ENCODE measurements at regions of chr1 and their contacts with region 1.

Region 1: GRCh38 chr1:211285196-211285595 is 26.0 kb downstream of the RCOR3 start:
- DNase-seq: no peak
- ATAC-seq: no peak
- H3K4me3 ChIP-seq: no peak overlapping the region
- H3K4me3 Mint-ChIP-seq: no peak overlapping the region
- H3K27ac ChIP-seq: no peak overlapping the region
- H3K27ac Mint-ChIP-seq: no peak overlapping the region
- H3K4me1 ChIP-seq: no peaks in the 10 kb centered on the region
- H3K4me1 Mint-ChIP-seq: peaks cover 8 to 18% (median 12%) of the 10 kb centered on the region in 3 donors
- H3K27me3 ChIP-seq: no peaks in the 10 kb centered on the region
- H3K27me3 Mint-ChIP-seq: no peaks in the 10 kb centered on the region

Region 2: GRCh38 chr1:211258756-211259637 is 26.2 kb before region 1 on chr1 and contains the start of gene RCOR3:
- CTCF ChIA-PET with region 1: no interaction called
- POLR2A ChIA-PET with region 1: interaction called in 1 of 2 experiments, 17 read pairs
- DNase-seq: peak; percentile 81 to 93 (median 88)
- ATAC-seq: peak; percentile 81 to 87 (median 84)
- H3K4me3 ChIP-seq: peak within 1 kb of the TSS; percentile 86 to 87
- H3K4me3 Mint-ChIP-seq: peak within 1 kb of the TSS; percentile 86 to 95 (median 94)
- H3K27ac ChIP-seq: peak within 1 kb of the TSS; percentile 82
- H3K27ac Mint-ChIP-seq: peak within 1 kb of the TSS; percentile 90 to 97
- H3K4me1 ChIP-seq: peaks cover 9 to 12% of the 10 kb centered on the region in 2 experiments
- H3K4me1 Mint-ChIP-seq: peaks cover 21 to 25% (median 21%) of the 10 kb centered on the region in 3 donors
- H3K27me3 ChIP-seq: no peaks in the 10 kb centered on the region
- H3K27me3 Mint-ChIP-seq: no peaks in the 10 kb centered on the region
- total RNA-seq, gene RCOR3: 58.2 to 72.4 (median 62.2) TPM

Measured in T-cell (primary cell).